Caco-2 (cell line): ENCODE measurements at regions of chr10 and their contacts with region 1.

Region 1: DNA sequence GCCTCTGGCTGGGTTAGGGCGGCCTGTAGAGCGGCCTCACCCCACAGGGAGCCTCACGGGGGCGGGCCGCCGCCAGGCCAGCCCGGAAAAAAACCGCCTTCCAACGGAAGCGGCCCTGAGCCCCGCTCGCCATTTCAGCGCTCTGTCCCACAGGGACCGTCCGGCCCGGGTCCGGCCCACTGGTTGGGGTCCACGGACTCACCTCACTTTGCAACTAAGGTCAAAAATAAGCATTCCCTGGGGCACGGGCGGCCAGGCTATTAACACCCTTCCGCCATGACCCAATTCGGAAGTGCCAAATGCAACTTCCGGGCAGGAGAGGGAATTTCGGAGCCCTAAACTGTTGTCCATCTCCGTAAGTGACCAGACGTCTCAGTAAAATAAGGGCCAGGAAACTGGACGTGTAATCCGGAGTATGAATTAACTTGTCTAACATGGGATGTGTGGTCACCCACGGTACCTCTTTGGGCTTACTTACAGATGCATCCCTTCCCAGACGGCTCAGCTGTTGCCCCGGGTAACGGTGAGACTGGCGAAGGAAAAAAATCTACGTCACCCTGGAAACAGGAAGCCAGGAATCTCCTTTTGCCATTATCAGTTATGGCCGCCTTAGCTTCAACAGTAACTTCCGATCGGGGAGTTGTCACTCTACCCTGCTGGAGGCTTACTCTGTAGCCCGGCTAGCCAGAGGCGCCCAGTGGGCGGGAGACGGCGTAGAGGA is at the start of gene BBIP1:
- DNase-seq: no peak
- H3K4me3 ChIP-seq: peak within 1 kb of the TSS; percentile 83
- H3K4me3 Mint-ChIP-seq: peak within 1 kb of the TSS; percentile 79
- H3K27ac Mint-ChIP-seq: peak within 1 kb of the TSS; percentile 100
- H3K4me1 ChIP-seq: peaks cover 12% of the 10 kb centered on the region; the same call in 1 of the 2 replicates
- H3K4me1 Mint-ChIP-seq: peaks cover 15% of the 10 kb centered on the region
- H3K27me3 ChIP-seq: no peaks in the 10 kb centered on the region
- H3K27me3 Mint-ChIP-seq: no peaks in the 10 kb centered on the region
- CTCF ChIP-seq: peak in 1 of 2 experiments; percentile 6
- total RNA-seq, gene BBIP1: 16.7 and 19.2 TPM in 2 replicates

Region 2: GRCh38 chr10:110304780-110305421 is 613.9 kb before region 1 on chr10 and contains the start of gene SMNDC1:
- CTCF ChIA-PET with region 1: interaction called, 6 read pairs
- POLR2A ChIA-PET with region 1: interaction called, 6 read pairs
- intact Hi-C with region 1: loop called (anchors 10 kb)
- DNase-seq: peak; percentile 99
- H3K4me3 ChIP-seq: peak within 1 kb of the TSS; percentile 94
- H3K4me3 Mint-ChIP-seq: peak within 1 kb of the TSS; percentile 91
- H3K27ac Mint-ChIP-seq: peak within 1 kb of the TSS; percentile 90
- H3K4me1 ChIP-seq: peaks cover 13% of the 10 kb centered on the region
- H3K4me1 Mint-ChIP-seq: no peaks in the 10 kb centered on the region
- H3K27me3 ChIP-seq: no peaks in the 10 kb centered on the region
- H3K27me3 Mint-ChIP-seq: no peaks in the 10 kb centered on the region
- CTCF ChIP-seq: no peak
- total RNA-seq, gene SMNDC1: 51.6 and 52.4 TPM in 2 replicates

Region 3: GRCh38 chr10:110803830-110804338 is 114.9 kb before region 1 on chr10:
- CTCF ChIA-PET with region 1: interaction called, 14 read pairs
- POLR2A ChIA-PET with region 1: interaction called, 5 read pairs
- intact Hi-C with region 1: no loop called
- DNase-seq: peak; percentile 55 to 72
- H3K4me3 ChIP-seq: no peak overlapping the region
- H3K4me3 Mint-ChIP-seq: no peak overlapping the region
- H3K27ac Mint-ChIP-seq: peak overlapping the region; percentile 68
- H3K4me1 ChIP-seq: peaks cover 6% of the 10 kb centered on the region
- H3K4me1 Mint-ChIP-seq: peaks cover 13% of the 10 kb centered on the region
- H3K27me3 ChIP-seq: no peaks in the 10 kb centered on the region
- H3K27me3 Mint-ChIP-seq: peaks cover 3% of the 10 kb centered on the region
- CTCF ChIP-seq: peak; percentile 55 to 92

Region 4: DNA sequence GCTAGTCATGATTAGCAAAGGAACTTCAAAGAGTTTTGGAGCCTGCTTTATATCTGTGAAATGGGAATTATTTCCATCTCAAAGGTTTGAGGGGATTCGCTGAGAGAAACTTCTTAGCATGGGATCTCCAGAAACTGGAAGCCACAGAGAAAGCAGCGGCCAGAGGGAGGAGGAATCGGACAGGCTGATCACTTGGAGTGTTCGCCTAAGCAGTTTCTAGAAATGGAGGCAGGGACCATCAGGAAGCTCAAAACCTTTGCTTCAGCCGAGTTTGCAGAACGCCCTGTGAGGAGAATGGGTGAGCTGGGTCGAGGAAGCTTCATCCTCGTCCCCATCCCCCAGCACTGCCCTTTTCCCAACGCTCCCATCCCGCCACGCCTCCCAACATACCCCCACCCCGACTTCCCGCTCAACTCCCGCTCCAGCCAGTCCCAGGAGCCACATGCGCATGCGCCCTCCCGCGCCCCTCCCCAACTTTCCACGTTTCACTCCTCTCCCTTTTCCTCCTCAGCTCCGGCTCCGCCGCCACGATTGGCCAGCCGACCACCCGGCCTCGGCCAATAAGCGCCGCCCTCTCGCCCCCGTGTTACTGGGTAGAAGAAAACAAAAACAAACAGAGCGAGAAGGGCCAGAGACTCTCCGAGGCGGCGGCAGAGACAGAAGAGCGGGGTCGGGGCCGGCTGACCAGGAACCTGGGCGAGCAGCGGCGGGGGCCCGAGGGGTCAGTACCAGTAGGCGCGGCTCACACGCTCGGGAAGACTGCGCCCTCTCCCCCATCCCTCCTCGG is 47.3 kb before region 1 on chr10 and contains the start of gene PDCD4:
- CTCF ChIA-PET with region 1: interaction called, 8 read pairs
- POLR2A ChIA-PET with region 1: interaction called, 17 read pairs
- intact Hi-C with region 1: loop called (anchors 1 kb)
- DNase-seq: peak; percentile 99 to 100
- H3K4me3 ChIP-seq: peak within 1 kb of the TSS; percentile 72
- H3K4me3 Mint-ChIP-seq: peak within 1 kb of the TSS; percentile 85
- H3K27ac Mint-ChIP-seq: peak within 1 kb of the TSS; percentile 93
- H3K4me1 ChIP-seq: peaks cover 10% of the 10 kb centered on the region; the same call in 1 of the 2 replicates
- H3K4me1 Mint-ChIP-seq: peaks cover 12% of the 10 kb centered on the region
- H3K27me3 ChIP-seq: no peaks in the 10 kb centered on the region
- H3K27me3 Mint-ChIP-seq: no peaks in the 10 kb centered on the region
- CTCF ChIP-seq: no peak
- total RNA-seq, gene PDCD4: 65.5 and 66.1 TPM in 2 replicates

Region 5: DNA sequence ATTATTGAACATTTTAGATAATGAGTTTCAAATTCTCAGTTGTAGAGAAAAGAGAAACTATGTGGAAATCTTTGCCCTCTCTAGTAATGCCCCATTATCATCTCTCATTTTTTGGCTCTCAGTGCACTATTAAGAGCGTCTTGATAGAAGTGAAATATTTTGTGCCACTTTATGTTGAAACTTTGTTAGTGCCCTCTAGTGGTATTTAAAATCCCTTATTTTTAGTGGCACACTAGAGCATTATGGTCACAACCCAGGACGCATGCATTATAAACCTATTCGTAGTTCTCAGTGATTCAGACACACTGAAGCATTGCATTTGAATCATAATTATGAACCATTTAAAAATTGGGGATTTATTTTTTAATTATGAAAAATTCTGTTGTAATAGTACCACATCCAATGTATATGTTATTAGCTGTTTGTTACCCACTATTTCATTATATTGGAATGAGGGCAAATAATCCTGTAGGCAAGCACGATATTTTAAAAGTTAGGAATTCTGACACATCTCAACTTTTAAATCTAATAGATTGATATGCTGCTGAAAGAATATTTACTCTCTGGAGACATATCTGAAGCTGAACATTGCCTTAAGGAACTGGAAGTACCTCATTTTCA is 25.1 kb before region 1 on chr10:
- CTCF ChIA-PET with region 1: interaction called, 9 read pairs
- POLR2A ChIA-PET with region 1: interaction called, 6 read pairs
- intact Hi-C with region 1: loop called (anchors 1 kb)
- DNase-seq: peak in 1 of 2 experiments; percentile 29
- H3K4me3 ChIP-seq: no peak overlapping the region
- H3K4me3 Mint-ChIP-seq: no peak overlapping the region
- H3K27ac Mint-ChIP-seq: no peak overlapping the region
- H3K4me1 ChIP-seq: peaks cover 7% of the 10 kb centered on the region; the same call in 1 of the 2 replicates
- H3K4me1 Mint-ChIP-seq: peaks cover 17% of the 10 kb centered on the region
- H3K27me3 ChIP-seq: no peaks in the 10 kb centered on the region
- H3K27me3 Mint-ChIP-seq: no peaks in the 10 kb centered on the region
- CTCF ChIP-seq: peak; percentile 35 to 48

Region 6: GRCh38 chr10:110901954-110902819 is 16.6 kb before region 1 on chr10:
- CTCF ChIA-PET with region 1: interaction called, 3 read pairs
- POLR2A ChIA-PET with region 1: interaction called, 9 read pairs
- intact Hi-C with region 1: loop called (anchors 1 kb)
- DNase-seq: peak in 1 of 2 experiments; percentile 47
- H3K4me3 ChIP-seq: no peak overlapping the region
- H3K4me3 Mint-ChIP-seq: no peak overlapping the region
- H3K27ac Mint-ChIP-seq: peak overlapping the region; percentile 75
- H3K4me1 ChIP-seq: 0 out of 2 replicates have a peak, but pooled peaks cover 1% of the 10 kb centered on the region
- H3K4me1 Mint-ChIP-seq: peaks cover 14% of the 10 kb centered on the region
- H3K27me3 ChIP-seq: no peaks in the 10 kb centered on the region
- H3K27me3 Mint-ChIP-seq: no peaks in the 10 kb centered on the region
- CTCF ChIP-seq: no peak

Region 7: DNA sequence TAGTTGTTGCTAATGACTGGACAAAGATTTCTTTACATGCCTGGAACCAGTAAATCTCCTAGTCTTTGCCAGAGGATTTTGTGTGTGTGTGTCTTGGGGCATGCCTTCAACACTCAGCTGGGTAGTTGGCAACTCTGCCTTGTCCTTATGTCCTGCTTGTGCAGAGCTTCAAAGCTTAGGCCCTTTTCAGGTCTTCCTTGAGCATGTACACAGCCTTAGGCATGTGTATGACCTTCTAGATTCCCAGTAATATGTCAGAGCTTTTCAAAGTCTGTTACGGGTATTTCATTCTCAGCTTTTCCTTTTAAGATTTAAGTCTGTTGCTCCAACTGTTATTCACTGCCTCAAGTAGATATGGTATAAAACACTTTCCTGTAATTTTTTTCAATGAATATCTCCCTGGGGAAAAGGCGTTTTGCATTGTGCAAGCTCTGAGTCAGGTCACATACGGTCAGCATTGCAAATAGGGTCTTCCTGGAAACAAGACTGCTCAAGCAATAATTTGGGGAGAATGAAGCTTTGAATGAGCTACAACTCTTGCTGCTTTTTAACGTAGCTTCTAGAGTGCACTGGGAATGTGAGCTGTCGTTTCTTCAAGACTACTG is 26.1 kb after region 1 on chr10:
- CTCF ChIA-PET with region 1: interaction called, 11 read pairs
- POLR2A ChIA-PET with region 1: no interaction called
- intact Hi-C with region 1: no loop called
- DNase-seq: no peak
- H3K4me3 ChIP-seq: no peak overlapping the region
- H3K4me3 Mint-ChIP-seq: no peak overlapping the region
- H3K27ac Mint-ChIP-seq: no peak overlapping the region
- H3K4me1 ChIP-seq: no peaks in the 10 kb centered on the region
- H3K4me1 Mint-ChIP-seq: peaks cover 8% of the 10 kb centered on the region
- H3K27me3 ChIP-seq: no peaks in the 10 kb centered on the region
- H3K27me3 Mint-ChIP-seq: no peaks in the 10 kb centered on the region
- CTCF ChIP-seq: no peak

Region 8: GRCh38 chr10:110959379-110960332 is 40.9 kb after region 1 on chr10:
- CTCF ChIA-PET with region 1: no interaction called
- POLR2A ChIA-PET with region 1: no interaction called
- intact Hi-C with region 1: no loop called
- DNase-seq: no peak
- H3K4me3 ChIP-seq: no peak overlapping the region
- H3K4me3 Mint-ChIP-seq: no peak overlapping the region
- H3K27ac Mint-ChIP-seq: no peak overlapping the region
- H3K4me1 ChIP-seq: no peaks in the 10 kb centered on the region
- H3K4me1 Mint-ChIP-seq: no peaks in the 10 kb centered on the region
- H3K27me3 ChIP-seq: no peaks in the 10 kb centered on the region
- H3K27me3 Mint-ChIP-seq: no peaks in the 10 kb centered on the region
- CTCF ChIP-seq: no peak